Endothelial cell of umbilical vein (primary cell): ENCODE measurements at regions of chr1 and their contacts with region 1.

Region 1: DNA sequence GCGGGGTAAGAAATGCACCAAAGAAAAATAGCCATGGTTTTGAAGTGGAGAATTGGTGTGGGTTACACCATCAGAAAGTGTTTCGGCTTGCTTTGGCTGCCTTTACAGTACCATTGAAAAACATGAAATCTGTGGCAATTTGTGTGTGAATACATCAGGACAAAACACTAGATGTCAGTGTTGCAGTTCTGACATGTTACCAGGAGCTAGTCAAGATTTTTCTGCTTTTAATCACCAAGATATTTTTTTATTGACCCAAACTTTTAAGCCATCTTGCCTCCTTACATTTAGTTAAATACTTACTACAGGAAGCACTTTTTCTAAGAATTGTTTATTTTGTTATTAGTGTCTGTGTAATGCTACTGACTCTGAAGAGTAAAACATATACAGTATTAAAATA is 14.3 kb downstream of the RRP15 start:
- DNase-seq: peak; percentile 61
- H3K4me3 ChIP-seq: no peak overlapping the region
- H3K27ac ChIP-seq: no peak overlapping the region
- H3K4me1 ChIP-seq: no peaks in the 10 kb centered on the region
- H3K27me3 ChIP-seq: no peaks in the 10 kb centered on the region
- CTCF ChIP-seq: peak; percentile 27 to 39
- POLR2A ChIP-seq: no peak

Region 2: DNA sequence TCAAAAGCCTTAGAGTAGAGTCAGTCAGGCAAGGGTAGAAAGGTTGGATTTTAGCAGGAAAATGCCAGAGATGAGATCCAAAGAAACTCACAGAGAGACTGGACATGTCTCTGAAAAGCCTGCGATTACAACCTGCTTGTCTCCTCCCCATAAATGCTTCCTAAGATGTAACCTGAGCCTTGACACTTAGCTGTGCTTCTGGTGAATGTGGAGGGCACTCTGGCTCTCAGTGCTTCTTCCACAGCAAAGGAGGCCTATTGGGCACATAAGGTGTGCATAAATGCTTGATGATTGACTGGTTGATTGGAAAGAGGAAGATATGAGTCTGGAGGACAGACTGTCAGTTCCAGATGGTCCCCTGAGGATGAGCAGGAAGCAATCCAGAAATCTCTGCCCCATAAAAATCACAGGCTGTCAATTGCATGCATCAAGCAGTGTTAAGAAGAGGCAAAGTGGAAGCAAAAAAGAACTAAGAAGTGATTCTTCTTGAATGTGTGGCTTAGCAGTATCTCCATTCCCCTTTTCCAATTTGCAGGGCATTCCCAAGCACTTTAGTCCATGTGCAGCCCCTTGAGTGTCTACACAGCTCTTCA is 250.5 kb before region 1 on chr1:
- CTCF ChIA-PET with region 1: no interaction called
- POLR2A ChIA-PET with region 1: no interaction called
- dilution Hi-C with region 1: no loop called
- intact Hi-C with region 1: no loop called
- DNase-seq: no peak
- H3K4me3 ChIP-seq: no peak overlapping the region
- H3K27ac ChIP-seq: no peak overlapping the region
- H3K4me1 ChIP-seq: no peaks in the 10 kb centered on the region
- H3K27me3 ChIP-seq: no peaks in the 10 kb centered on the region
- CTCF ChIP-seq: no peak
- POLR2A ChIP-seq: no peak

Region 3: DNA sequence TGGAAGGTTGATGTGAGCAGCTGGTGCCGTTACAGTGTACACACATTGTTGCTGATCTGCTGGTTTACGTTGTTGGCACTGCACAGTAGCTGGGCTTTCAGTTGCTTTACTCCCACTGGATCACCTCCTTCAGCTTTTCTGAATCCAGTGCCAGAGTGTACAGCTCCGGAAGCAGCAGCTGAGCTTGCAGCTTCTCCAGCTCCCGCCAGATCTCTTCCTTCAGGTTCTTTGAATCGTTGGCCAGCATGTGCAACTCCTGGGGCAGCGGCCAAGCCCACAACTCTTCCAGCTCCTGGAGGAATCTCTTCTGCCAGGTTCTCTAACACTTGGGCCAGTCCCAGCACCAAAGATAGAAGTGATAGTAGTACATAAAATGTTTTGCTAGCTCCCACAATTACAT is 164.0 kb before region 1 on chr1:
- CTCF ChIA-PET with region 1: no interaction called
- POLR2A ChIA-PET with region 1: no interaction called
- dilution Hi-C with region 1: no loop called
- intact Hi-C with region 1: no loop called
- DNase-seq: no peak
- H3K4me3 ChIP-seq: no peak overlapping the region
- H3K27ac ChIP-seq: no peak overlapping the region
- H3K4me1 ChIP-seq: no peaks in the 10 kb centered on the region
- H3K27me3 ChIP-seq: no peaks in the 10 kb centered on the region
- CTCF ChIP-seq: no peak
- POLR2A ChIP-seq: no peak

Region 4: DNA sequence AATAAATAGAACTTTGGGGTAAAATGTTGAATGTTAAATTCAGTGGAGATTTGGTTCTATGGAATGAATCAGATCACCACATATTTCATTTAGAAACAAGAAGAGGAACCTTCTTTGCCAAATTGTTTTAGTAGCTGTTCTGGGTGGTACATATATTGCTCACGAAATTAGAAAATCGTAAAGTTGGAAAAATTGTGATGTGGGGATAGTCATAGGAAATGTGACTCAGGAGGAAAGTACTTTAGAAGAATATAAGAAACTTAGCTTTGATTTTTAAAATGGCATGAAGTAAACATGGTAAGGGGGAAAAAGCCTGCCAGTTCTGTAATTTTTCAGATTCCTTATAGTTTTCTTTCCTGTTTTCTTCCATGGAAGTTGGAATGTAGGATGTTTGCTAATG is 13.1 kb after region 1 on chr1:
- CTCF ChIA-PET with region 1: interaction called, 16 read pairs
- POLR2A ChIA-PET with region 1: no interaction called
- dilution Hi-C with region 1: no loop called
- intact Hi-C with region 1: no loop called
- DNase-seq: peak; percentile 74
- H3K4me3 ChIP-seq: peak overlapping the region in 1 of 3 experiments; percentile 76
- H3K27ac ChIP-seq: peak overlapping the region; percentile 84
- H3K4me1 ChIP-seq: peaks cover 20% of the 10 kb centered on the region
- H3K27me3 ChIP-seq: no peaks in the 10 kb centered on the region
- CTCF ChIP-seq: no peak
- POLR2A ChIP-seq: no peak

Region 5: DNA sequence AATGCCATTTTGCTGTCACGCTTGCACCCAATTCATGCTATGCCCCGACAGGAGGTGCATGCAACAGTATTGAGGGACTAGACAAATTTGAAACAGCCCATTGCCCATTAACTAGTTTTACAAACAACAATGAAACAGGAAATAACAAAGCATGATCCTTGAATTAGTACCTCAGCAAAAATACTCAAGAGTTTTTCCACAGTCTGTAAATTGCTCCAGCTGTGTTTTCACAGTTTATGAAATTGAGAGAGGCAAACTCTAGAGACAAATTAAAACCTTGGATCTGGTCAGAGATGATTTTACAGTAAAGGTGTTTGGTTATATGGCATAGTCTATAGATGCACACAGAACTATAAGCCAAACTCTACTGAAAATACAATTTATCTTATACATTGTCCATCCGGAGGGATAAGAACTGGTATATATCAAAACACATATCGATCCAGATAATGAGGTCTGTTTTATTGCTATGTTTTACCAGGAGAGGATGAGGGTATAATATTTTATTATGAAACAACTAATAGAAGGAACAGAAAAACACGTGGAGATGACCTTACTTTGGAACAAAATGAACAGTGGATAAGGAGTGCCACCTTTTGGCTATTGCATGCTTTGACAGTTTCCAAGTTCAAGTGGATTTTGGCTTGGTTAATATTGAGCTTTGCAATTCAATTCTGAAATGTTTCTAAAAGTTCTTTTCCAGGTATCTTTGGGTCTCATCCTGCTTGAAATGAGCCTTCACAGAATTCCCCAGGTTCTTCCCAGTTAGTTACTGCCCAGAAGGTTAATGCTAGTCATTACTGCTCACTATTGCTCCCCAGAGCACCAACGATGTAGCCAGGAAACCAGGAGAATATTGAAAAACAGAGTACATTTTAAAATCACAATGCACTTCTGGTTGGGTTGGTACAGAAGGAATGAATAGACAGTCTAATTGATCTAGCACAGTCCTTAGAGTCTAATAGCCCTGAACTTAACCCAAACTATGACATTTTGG is 1267.8 kb after region 1 on chr1:
- CTCF ChIA-PET with region 1: interaction called, 16 read pairs
- POLR2A ChIA-PET with region 1: no interaction called
- dilution Hi-C with region 1: no loop called
- intact Hi-C with region 1: no loop called
- DNase-seq: peak; percentile 45
- H3K4me3 ChIP-seq: no peak overlapping the region
- H3K27ac ChIP-seq: no peak overlapping the region
- H3K4me1 ChIP-seq: no peaks in the 10 kb centered on the region
- H3K27me3 ChIP-seq: peaks cover 0 to 3% of the 10 kb centered on the region in 2 experiments
- CTCF ChIP-seq: peak; percentile 19 to 32
- POLR2A ChIP-seq: no peak

Region 6: DNA sequence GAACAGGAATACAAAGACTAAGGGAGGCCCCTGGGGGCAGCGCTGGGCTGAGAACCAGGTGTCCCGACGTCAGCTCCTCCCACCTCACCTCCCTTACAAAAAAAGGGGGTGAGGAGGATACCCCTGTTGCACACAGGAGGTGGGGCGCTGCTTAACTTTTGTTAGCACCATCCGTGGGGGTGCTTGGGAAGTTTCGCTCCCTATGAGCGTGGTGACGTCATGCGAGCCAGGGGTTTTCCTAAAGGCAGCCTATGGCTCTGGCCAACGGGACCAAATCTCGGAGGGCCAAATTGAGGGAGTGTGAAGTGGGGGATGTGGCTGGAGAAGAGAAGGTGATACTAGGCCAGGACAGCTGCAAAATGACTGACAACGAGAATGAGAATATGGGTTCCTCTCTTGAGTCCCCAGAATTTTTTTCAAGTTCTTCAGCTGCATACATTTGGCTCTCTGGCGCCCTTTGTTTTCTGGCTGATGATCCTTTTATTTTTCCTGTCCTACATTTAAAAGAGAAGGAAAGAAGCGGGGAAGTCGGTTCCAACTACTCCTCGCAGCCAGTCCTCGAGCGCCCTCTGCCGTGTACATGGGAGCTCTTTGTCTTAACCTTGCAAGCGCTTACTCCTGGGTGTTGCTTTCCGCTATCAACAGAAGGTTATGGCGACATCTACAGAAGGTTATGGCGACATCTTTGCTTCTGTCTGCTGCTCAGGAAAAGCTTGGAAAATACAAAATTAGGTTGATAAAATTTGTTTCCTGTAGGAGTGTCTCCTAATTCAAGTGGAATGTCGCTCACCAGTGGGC is 1361.4 kb after region 1 on chr1:
- CTCF ChIA-PET with region 1: interaction called, 14 read pairs
- POLR2A ChIA-PET with region 1: no interaction called
- dilution Hi-C with region 1: no loop called
- intact Hi-C with region 1: loop called (anchors 2 kb)
- DNase-seq: peak; percentile 84
- H3K4me3 ChIP-seq: peak overlapping the region in 2 of 3 experiments; percentile 24 to 49
- H3K27ac ChIP-seq: no peak overlapping the region
- H3K4me1 ChIP-seq: peaks cover 2% of the 10 kb centered on the region
- H3K27me3 ChIP-seq: peaks cover 0 to 9% of the 10 kb centered on the region in 2 experiments
- CTCF ChIP-seq: peak; percentile 82 to 86
- POLR2A ChIP-seq: no peak